Dendritic cell treated with granulocyte-macrophage colony-stimulating factor and Interleukin-4, amounts not matched to agents 40 ng/mL and 50 ng/mL, for 4 days (primary cell): ENCODE measurements at regions of chr1 and their contacts with region 1.

Region 1: GRCh38 chr1:113904674-113905434 is at the starts of genes AP4B1 and DCLRE1B:
- H3K4me3 Mint-ChIP-seq: peak within 1 kb of the TSS; percentile 97
- H3K27ac Mint-ChIP-seq: peak within 1 kb of the TSS; percentile 90
- H3K4me1 Mint-ChIP-seq: peaks cover 60% of the 10 kb centered on the region
- H3K27me3 Mint-ChIP-seq: no peaks in the 10 kb centered on the region

Region 2: DNA sequence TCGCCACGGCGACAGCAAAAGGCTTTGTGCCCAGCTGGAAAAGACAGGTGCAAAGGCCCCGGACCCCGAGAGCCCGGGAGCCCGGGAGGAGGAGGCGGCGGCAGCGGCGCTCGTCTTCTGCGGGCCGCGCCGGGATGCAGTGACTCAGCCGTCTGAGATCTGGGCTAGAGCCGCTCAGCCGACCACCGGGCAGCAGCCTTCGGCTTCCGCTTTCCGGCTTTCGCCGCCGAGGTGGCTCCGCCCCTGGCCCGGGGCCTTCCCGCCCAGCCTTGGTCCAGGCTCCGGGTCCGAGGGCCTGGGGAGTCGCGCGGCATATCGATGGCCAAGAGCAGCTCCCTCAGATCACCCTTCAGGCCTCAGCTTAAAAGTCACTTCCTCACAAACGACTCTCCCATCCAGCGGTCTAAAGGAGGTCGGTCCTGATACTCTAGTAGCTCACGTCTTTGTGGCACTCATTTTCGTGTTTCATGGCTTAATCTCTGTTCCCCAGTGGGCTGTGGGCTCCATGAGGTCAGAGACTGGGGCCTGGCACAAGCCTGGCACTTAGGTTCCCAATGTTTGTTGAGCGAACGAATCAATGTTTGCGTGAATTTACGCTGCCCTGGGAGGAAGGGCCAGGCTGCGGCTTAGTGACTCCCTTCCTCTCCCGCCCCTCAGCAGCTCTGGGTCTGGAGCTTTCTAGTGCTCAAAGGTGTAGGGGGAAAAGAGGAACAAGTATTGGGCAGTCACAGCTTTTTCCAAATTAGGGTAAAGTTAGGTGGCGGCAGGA is 145.3 kb before region 1 on chr1 and contains the start of gene PHTF1:
- intact Hi-C with region 1: loop called (anchors 1 kb)
- H3K4me3 Mint-ChIP-seq: peak within 1 kb of the TSS; percentile 97
- H3K27ac Mint-ChIP-seq: peak within 1 kb of the TSS; percentile 89
- H3K4me1 Mint-ChIP-seq: peaks cover 27% of the 10 kb centered on the region
- H3K27me3 Mint-ChIP-seq: no peaks in the 10 kb centered on the region

Region 3: GRCh38 chr1:113811888-113812660 is 92.8 kb before region 1 on chr1 and contains the start of gene RSBN1:
- intact Hi-C with region 1: loop called (anchors 1 kb)
- H3K4me3 Mint-ChIP-seq: peak within 1 kb of the TSS; percentile 86
- H3K27ac Mint-ChIP-seq: peak within 1 kb of the TSS; percentile 92
- H3K4me1 Mint-ChIP-seq: peaks cover 18% of the 10 kb centered on the region
- H3K27me3 Mint-ChIP-seq: no peaks in the 10 kb centered on the region

Region 4: DNA sequence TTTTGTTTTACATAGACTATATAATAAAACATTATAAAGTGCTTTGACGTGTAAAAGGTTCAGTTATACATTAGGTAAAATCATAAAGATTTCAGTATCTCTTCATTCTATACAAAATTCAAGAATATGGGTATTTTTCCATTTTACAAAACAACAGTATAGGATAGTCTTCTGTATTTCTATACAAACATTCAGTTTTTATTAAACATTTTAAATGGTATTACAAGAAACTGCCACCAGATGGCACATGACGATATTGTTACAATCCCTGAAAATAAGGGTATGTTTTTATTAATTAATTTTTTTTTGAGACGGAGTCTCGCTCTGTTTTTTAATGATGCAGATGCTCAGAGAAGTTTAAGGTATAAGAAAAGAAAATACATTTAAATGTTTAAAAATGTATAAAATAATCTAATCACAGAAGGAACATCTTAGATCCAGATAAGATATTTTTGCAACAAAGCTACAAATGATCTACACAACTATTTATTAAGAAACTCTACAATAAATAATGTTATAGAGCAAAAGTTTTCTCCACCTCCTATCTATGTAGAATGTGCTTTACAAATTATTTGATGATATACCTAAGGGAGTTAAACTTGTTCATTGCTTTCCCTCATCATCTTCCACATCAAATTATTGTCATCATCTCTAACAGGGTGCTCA is 69.1 kb before region 1 on chr1:
- intact Hi-C with region 1: loop called (anchors 1 kb)
- H3K4me3 Mint-ChIP-seq: no peak overlapping the region
- H3K27ac Mint-ChIP-seq: no peak overlapping the region
- H3K4me1 Mint-ChIP-seq: no peaks in the 10 kb centered on the region
- H3K27me3 Mint-ChIP-seq: no peaks in the 10 kb centered on the region

Region 5: GRCh38 chr1:113849060-113849459 is 55.8 kb before region 1 on chr1:
- intact Hi-C with region 1: no loop called
- H3K4me3 Mint-ChIP-seq: no peak overlapping the region
- H3K27ac Mint-ChIP-seq: no peak overlapping the region
- H3K4me1 Mint-ChIP-seq: peaks cover 5% of the 10 kb centered on the region
- H3K27me3 Mint-ChIP-seq: no peaks in the 10 kb centered on the region

Region 6: DNA sequence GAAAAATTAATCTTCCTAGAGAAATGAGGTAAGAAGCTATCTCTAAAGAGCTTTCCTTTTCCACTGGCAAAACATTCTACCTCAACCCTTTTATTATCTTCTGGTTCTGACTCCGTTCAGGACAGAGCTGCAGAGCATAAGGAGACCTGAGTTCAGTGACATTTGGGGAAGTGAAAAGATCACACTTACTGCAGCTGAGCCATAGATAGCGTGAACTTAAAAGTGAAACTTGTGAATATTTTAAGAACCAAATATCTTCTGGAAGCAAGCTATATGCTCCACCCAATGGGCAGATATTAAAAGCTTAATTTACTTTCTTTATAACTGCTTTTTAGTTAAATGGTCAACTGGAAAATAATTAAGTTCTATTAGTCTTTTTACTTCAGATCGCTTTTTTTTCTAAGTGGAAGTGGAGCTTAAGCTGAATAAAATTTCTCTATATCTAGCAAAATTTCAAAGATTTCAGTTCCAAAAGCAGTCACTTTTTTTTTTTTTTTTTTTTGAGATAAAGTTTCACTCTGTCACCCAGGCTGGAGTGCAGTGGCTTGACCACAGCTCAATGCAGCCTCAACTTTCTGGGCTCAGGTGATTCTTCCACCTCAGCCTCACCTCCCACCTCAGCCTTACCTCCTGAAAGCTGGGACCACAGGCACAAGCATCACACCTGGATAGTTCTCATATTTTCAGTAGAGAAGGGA is 45.2 kb before region 1 on chr1:
- intact Hi-C with region 1: loop called (anchors 5 kb)
- H3K4me3 Mint-ChIP-seq: peak overlapping the region; percentile 44
- H3K27ac Mint-ChIP-seq: peak overlapping the region; percentile 69
- H3K4me1 Mint-ChIP-seq: peaks cover 65% of the 10 kb centered on the region
- H3K27me3 Mint-ChIP-seq: no peaks in the 10 kb centered on the region

Region 7: DNA sequence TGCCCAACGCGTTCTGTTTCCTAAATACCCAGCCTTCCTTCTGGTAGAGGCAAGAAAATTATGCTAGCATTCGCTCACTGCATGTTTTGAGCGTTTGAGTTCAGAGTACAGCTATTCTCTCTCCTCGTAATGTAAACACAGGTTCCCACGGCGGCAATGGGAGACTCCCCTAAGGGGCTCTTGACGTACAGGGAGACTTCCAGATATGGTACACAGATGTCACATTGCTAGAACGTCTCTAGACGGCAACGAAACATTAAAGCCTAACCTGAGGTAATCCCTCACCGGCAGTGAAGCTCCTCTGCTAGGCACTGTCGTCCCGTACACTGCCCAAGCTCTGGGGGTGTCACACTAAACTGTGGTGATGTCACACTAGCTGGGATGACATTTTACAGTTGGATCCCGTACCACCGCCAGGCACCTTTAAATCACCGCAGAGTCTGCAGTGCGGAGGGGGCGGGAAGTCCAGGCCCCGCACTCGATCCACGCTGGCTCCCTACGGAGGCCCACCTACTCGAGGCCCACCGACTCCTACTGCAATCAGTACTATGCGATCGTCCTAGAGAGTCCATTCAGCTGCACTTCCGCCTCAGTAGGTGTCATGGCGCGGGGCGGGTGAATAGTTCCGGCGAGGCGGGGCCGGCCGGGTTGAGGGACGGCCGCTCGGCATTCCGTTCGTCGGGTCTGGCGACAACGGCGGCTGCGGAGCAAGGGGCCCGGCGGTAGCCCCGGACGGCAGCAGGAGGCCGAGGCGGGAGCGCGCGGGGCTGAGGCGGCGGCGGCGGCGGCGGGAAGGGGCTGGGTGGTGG is 24.3 kb after region 1 on chr1 and contains the start of gene HIPK1:
- intact Hi-C with region 1: loop called (anchors 1 kb)
- H3K4me3 Mint-ChIP-seq: peak within 1 kb of the TSS; percentile 97
- H3K27ac Mint-ChIP-seq: peak within 1 kb of the TSS; percentile 98
- H3K4me1 Mint-ChIP-seq: peaks cover 69% of the 10 kb centered on the region
- H3K27me3 Mint-ChIP-seq: no peaks in the 10 kb centered on the region

Region 8: GRCh38 chr1:113949007-113949406 is 44.2 kb after region 1 on chr1:
- intact Hi-C with region 1: no loop called
- H3K4me3 Mint-ChIP-seq: no peak overlapping the region
- H3K27ac Mint-ChIP-seq: no peak overlapping the region
- H3K4me1 Mint-ChIP-seq: peaks cover 42% of the 10 kb centered on the region
- H3K27me3 Mint-ChIP-seq: no peaks in the 10 kb centered on the region